ENCODE measurements at regions of chr15 and their contacts with region 1.

Region 1: GRCh38 chr15:90529371-90530249 is at the start of gene CRTC3:
- DNase-seq: peak in 1 of 2 experiments; percentile 51
- H3K4me3 ChIP-seq: peak within 1 kb of the TSS; percentile 61
- H3K27ac ChIP-seq: no peak within 1 kb of the TSS
- H3K4me1 ChIP-seq: peaks cover 18% of the 10 kb centered on the region
- H3K27me3 ChIP-seq: no peaks in the 10 kb centered on the region
- CTCF ChIP-seq: no peak
- total RNA-seq, gene CRTC3: 18.6 and 22.4 TPM in 2 replicates

Region 2: DNA sequence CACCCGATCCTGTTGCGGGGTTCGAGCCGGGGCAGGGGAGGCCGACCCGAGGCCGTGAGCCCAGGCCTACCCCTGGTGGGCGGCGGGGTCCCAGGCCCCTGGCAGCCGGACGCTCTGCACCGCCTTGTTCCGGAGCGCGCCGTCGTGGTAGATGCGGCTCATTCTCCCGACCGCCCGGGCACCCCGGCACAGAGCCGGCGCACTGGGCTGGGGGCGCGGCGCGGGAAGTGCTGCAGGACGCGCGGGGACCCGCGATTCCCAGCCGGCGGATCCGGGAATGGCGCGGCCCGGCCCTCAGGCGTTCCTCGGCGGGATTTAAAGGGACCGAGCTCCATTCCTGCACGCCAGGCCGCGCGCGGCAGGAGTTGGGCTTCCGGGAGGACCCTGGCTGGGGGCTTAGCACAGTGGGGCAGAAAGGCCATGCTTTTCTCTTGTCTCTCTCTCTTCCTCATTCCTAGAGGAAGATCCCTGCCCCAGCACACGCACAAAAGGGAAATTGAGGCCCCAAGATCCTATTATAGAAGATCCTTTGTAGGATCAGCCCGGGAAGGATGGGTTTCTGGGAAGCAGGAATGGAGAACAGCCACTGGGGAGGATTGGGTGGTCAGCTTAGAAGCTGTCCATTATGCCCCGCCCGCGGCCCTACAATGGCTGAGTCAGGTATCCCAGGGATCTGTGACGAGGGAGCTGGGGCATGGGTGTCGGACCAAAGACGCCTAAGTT is 616.8 kb before region 1 on chr15 and contains the start of gene ARPIN:
- CTCF ChIA-PET with region 1: no interaction called
- POLR2A ChIA-PET with region 1: interaction called, 12 read pairs
- intact Hi-C with region 1: no loop called
- DNase-seq: peak in 1 of 2 experiments; percentile 49
- H3K4me3 ChIP-seq: peak within 1 kb of the TSS; percentile 96
- H3K27ac ChIP-seq: peak within 1 kb of the TSS; percentile 59
- H3K4me1 ChIP-seq: peaks cover 60% of the 10 kb centered on the region
- H3K27me3 ChIP-seq: no peaks in the 10 kb centered on the region
- CTCF ChIP-seq: no peak
- total RNA-seq, gene ARPIN: 28.6 and 30.4 TPM in 2 replicates

Region 3: DNA sequence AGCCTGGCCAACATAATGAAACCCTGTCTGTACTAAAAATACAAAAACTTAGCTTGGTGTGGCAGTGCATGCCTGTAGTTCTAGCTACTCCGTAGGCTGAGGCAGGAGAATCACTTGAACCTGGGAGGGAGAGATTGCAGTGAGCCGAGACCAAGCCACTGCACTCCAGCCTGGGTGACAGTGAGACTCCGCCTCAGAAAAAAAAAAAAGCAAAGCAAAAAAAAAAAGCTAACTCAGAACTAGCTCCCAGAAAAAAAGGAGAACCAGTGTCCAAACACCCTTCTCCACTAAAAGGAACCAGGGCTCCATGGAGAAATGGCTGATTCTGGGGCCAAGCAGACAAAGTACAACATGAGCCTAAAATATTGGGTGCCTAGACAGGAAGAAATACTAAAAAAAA is 16.6 kb before region 1 on chr15:
- CTCF ChIA-PET with region 1: no interaction called
- POLR2A ChIA-PET with region 1: interaction called, 20 read pairs
- intact Hi-C with region 1: no loop called
- DNase-seq: no peak
- H3K4me3 ChIP-seq: no peak overlapping the region
- H3K27ac ChIP-seq: no peak overlapping the region
- H3K4me1 ChIP-seq: no peaks in the 10 kb centered on the region
- H3K27me3 ChIP-seq: no peaks in the 10 kb centered on the region
- CTCF ChIP-seq: no peak

Region 4: GRCh38 chr15:90557186-90558084 is 27.8 kb after region 1 on chr15:
- CTCF ChIA-PET with region 1: no interaction called
- POLR2A ChIA-PET with region 1: no interaction called
- intact Hi-C with region 1: no loop called
- DNase-seq: no peak
- H3K4me3 ChIP-seq: no peak overlapping the region
- H3K27ac ChIP-seq: no peak overlapping the region
- H3K4me1 ChIP-seq: no peaks in the 10 kb centered on the region
- H3K27me3 ChIP-seq: no peaks in the 10 kb centered on the region
- CTCF ChIP-seq: no peak

Region 5: GRCh38 chr15:90638201-90638691 is 108.6 kb after region 1 on chr15:
- CTCF ChIA-PET with region 1: interaction called, 12 read pairs
- POLR2A ChIA-PET with region 1: no interaction called
- intact Hi-C with region 1: no loop called
- DNase-seq: no peak
- H3K4me3 ChIP-seq: no peak overlapping the region
- H3K27ac ChIP-seq: no peak overlapping the region
- H3K4me1 ChIP-seq: no peaks in the 10 kb centered on the region
- H3K27me3 ChIP-seq: no peaks in the 10 kb centered on the region
- CTCF ChIP-seq: no peak

Region 6: GRCh38 chr15:92107529-92107928 is 1577.9 kb after region 1 on chr15:
- CTCF ChIA-PET with region 1: interaction called, 17 read pairs
- POLR2A ChIA-PET with region 1: no interaction called
- intact Hi-C with region 1: no loop called
- DNase-seq: no peak
- H3K4me3 ChIP-seq: no peak overlapping the region
- H3K27ac ChIP-seq: no peak overlapping the region
- H3K4me1 ChIP-seq: no peaks in the 10 kb centered on the region
- H3K27me3 ChIP-seq: no peaks in the 10 kb centered on the region
- CTCF ChIP-seq: no peak

Measured in PC-9 (cell line).